Heart right ventricle (tissue), 16 donors: ENCODE measurements at regions of chr2 and their contacts with region 1.

Region 1: GRCh38 chr2:226791487-226792081 is 8.0 kb downstream of the IRS1 start:
- DNase-seq: peak; percentile 90 to 94
- ATAC-seq: peak; percentile 84 to 95 (median 93)
- H3K4me3 ChIP-seq: peak overlapping the region; percentile 44 to 95 (median 78)
- H3K27ac ChIP-seq: peak overlapping the region; percentile 90 to 97 (median 94)
- H3K4me1 ChIP-seq: peaks cover 8 to 94% (median 87%) of the 10 kb centered on the region in 9 donors
- H3K27me3 ChIP-seq: no peaks in the 10 kb centered on the region
- CTCF ChIP-seq: peak; percentile 10 to 68 (median 53)

Region 2: GRCh38 chr2:226030788-226031646 is 760.6 kb before region 1 on chr2:
- intact Hi-C with region 1: loop called in 1 of 10 experiments (anchors 10 kb)
- DNase-seq: peak; percentile 57 to 62
- ATAC-seq: peak; percentile 89 to 96 (median 95)
- H3K4me3 ChIP-seq: peak overlapping the region; percentile 39 to 64 (median 61)
- H3K27ac ChIP-seq: peak overlapping the region; percentile 23 to 77 (median 46)
- H3K4me1 ChIP-seq: peaks cover 0 to 19% (median 13%) of the 10 kb centered on the region in 9 donors
- H3K27me3 ChIP-seq: peaks cover 0 to 4% (median 0%) of the 10 kb centered on the region in 7 donors
- CTCF ChIP-seq: no peak

Region 3: GRCh38 chr2:226215902-226216503 is 575.6 kb before region 1 on chr2:
- intact Hi-C with region 1: loop called in 5 of 10 experiments (anchors 5 to 10 kb)
- DNase-seq: peak in 1 of 2 donors; percentile 53
- ATAC-seq: peak in 6 of 8 donors; percentile 72 to 86 (median 76)
- H3K4me3 ChIP-seq: no peak overlapping the region
- H3K27ac ChIP-seq: no peak overlapping the region
- H3K4me1 ChIP-seq: peaks cover 0 to 17% (median 10%) of the 10 kb centered on the region in 9 donors
- H3K27me3 ChIP-seq: no peaks in the 10 kb centered on the region
- CTCF ChIP-seq: peak in 8 of 9 donors; percentile 32 to 77 (median 68)

Region 4: GRCh38 chr2:226554701-226555100 is 236.9 kb before region 1 on chr2:
- intact Hi-C with region 1: loop called in 1 of 10 experiments (anchors 10 kb)
- DNase-seq: no peak
- ATAC-seq: no peak
- H3K4me3 ChIP-seq: no peak overlapping the region
- H3K27ac ChIP-seq: no peak overlapping the region
- H3K4me1 ChIP-seq: peaks cover 0 to 10% (median 0%) of the 10 kb centered on the region in 9 donors
- H3K27me3 ChIP-seq: no peaks in the 10 kb centered on the region
- CTCF ChIP-seq: no peak

Region 5: GRCh38 chr2:226661789-226662545 is 129.6 kb before region 1 on chr2:
- intact Hi-C with region 1: loop called in 4 of 10 experiments (anchors 5 to 10 kb)
- DNase-seq: peak; percentile 31 to 55
- ATAC-seq: peak; percentile 61 to 90 (median 80)
- H3K4me3 ChIP-seq: no peak overlapping the region
- H3K27ac ChIP-seq: peak overlapping the region in 9 of 10 donors; percentile 45 to 77 (median 62)
- H3K4me1 ChIP-seq: peaks cover 7 to 47% (median 34%) of the 10 kb centered on the region in 9 donors
- H3K27me3 ChIP-seq: peaks cover 0 to 13% (median 0%) of the 10 kb centered on the region in 7 donors
- CTCF ChIP-seq: no peak

Region 6: GRCh38 chr2:226733189-226733858 is 58.3 kb before region 1 on chr2:
- intact Hi-C with region 1: loop called in 5 of 10 experiments (anchors 5 to 10 kb)
- DNase-seq: no peak
- ATAC-seq: peak in 6 of 8 donors; percentile 32 to 71 (median 59)
- H3K4me3 ChIP-seq: no peak overlapping the region
- H3K27ac ChIP-seq: peak overlapping the region in 6 of 10 donors; percentile 6 to 55 (median 22)
- H3K4me1 ChIP-seq: peaks cover 4 to 35% (median 23%) of the 10 kb centered on the region in 9 donors
- H3K27me3 ChIP-seq: no peaks in the 10 kb centered on the region
- CTCF ChIP-seq: no peak